Caco-2 (cell line): ENCODE measurements at regions of chr1 and their contacts with region 1.

Region 1: GRCh38 chr1:84298328-84298683 is 3.2 kb upstream of the SAMD13 start:
- DNase-seq: peak; percentile 42 to 46
- H3K4me3 ChIP-seq: peak overlapping the region; percentile 82
- H3K4me3 Mint-ChIP-seq: peak overlapping the region; percentile 87
- H3K27ac Mint-ChIP-seq: peak overlapping the region; percentile 87
- H3K4me1 ChIP-seq: no peaks in the 10 kb centered on the region
- H3K4me1 Mint-ChIP-seq: no peaks in the 10 kb centered on the region
- H3K27me3 ChIP-seq: no peaks in the 10 kb centered on the region
- H3K27me3 Mint-ChIP-seq: no peaks in the 10 kb centered on the region
- CTCF ChIP-seq: no peak

Region 2: GRCh38 chr1:84271441-84272151 is 26.7 kb before region 1 on chr1:
- CTCF ChIA-PET with region 1: no interaction called
- POLR2A ChIA-PET with region 1: no interaction called
- intact Hi-C with region 1: loop called (anchors 1 kb)
- DNase-seq: peak; percentile 11 to 36
- H3K4me3 ChIP-seq: no peak overlapping the region
- H3K4me3 Mint-ChIP-seq: peak overlapping the region; percentile 51
- H3K27ac Mint-ChIP-seq: peak overlapping the region; percentile 92
- H3K4me1 ChIP-seq: peaks cover 37% of the 10 kb centered on the region
- H3K4me1 Mint-ChIP-seq: peaks cover 36% of the 10 kb centered on the region
- H3K27me3 ChIP-seq: no peaks in the 10 kb centered on the region
- H3K27me3 Mint-ChIP-seq: no peaks in the 10 kb centered on the region
- CTCF ChIP-seq: no peak

Region 3: GRCh38 chr1:84390226-84390625 is 91.9 kb after region 1 on chr1:
- CTCF ChIA-PET with region 1: no interaction called
- POLR2A ChIA-PET with region 1: no interaction called
- intact Hi-C with region 1: no loop called
- DNase-seq: no peak
- H3K4me3 ChIP-seq: no peak overlapping the region
- H3K4me3 Mint-ChIP-seq: no peak overlapping the region
- H3K27ac Mint-ChIP-seq: no peak overlapping the region
- H3K4me1 ChIP-seq: no peaks in the 10 kb centered on the region
- H3K4me1 Mint-ChIP-seq: no peaks in the 10 kb centered on the region
- H3K27me3 ChIP-seq: no peaks in the 10 kb centered on the region
- H3K27me3 Mint-ChIP-seq: no peaks in the 10 kb centered on the region
- CTCF ChIP-seq: no peak